Activated naive CD4-positive, alpha-beta T cell treated with anti-CD3 and anti-CD28 coated beads, Interleukin-2, amount 10 ng/mL, durations not matched to agents 7 days and 5 days (primary cell): ENCODE measurements at regions of chr22 and their contacts with region 1.

Region 1: GRCh38 chr22:50148991-50149721 is 21.4 kb upstream of the PANX2 start:
- DNase-seq: peak; percentile 84
- H3K4me3 Mint-ChIP-seq: no peak overlapping the region
- H3K27ac Mint-ChIP-seq: no peak overlapping the region
- H3K4me1 Mint-ChIP-seq: no peaks in the 10 kb centered on the region
- H3K27me3 Mint-ChIP-seq: peaks cover 34% of the 10 kb centered on the region

Region 2: GRCh38 chr22:49936018-49936952 is 212.9 kb before region 1 on chr22:
- CTCF ChIA-PET with region 1: no interaction called
- DNase-seq: peak; percentile 95
- H3K4me3 Mint-ChIP-seq: peak overlapping the region; percentile 69
- H3K27ac Mint-ChIP-seq: peak overlapping the region; percentile 92
- H3K4me1 Mint-ChIP-seq: peaks cover 35% of the 10 kb centered on the region
- H3K27me3 Mint-ChIP-seq: no peaks in the 10 kb centered on the region

Region 3: DNA sequence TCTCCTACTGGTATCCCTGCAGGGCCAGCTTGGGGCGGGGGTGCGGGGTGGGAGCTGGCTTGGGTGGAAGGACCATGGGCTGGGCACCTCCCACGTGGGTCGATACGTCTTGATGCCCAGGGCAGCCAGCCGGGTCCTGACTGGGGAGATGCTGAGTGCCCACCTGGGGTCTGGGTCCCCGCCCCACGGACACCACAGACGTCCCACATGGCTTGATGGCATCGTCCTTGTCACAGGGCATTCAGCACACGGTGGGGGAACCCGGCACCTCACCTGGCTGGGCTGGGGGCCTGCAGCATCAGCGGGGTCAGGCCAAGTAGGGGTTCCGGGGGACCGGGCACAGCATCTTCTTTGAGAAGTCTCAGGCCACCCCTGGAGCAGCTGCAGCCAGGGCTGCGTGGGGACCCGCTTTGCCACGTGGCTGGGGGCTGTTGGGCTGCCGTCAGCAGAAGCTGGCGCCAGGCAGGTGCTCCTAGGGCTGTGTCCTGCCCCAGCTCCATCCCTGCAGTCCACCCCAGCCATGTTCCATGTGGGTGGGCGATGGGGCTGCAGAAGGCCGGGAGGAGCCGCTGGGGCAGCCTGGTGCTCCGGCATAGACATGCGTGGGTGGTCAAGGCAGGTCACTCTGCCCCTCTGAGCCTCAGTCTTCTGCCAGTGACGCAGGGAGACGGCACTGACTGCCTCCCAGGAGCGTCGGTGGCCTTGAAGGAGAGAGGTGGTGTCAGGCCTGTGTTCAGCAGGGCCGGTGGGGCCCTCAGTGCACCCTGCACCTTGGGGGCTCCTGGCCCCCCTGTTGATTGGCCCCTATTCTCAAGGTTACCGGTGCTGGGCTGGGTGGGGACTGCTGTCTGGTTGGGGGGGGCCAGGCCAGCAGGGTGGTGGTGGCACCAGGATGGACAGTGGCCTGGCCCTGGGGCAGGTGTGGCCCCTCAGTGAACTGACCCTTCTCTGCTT is 60.1 kb after region 1 on chr22:
- CTCF ChIA-PET with region 1: interaction called, 14 read pairs
- DNase-seq: no peak
- H3K4me3 Mint-ChIP-seq: no peak overlapping the region
- H3K27ac Mint-ChIP-seq: no peak overlapping the region
- H3K4me1 Mint-ChIP-seq: peaks cover 11% of the 10 kb centered on the region
- H3K27me3 Mint-ChIP-seq: no peaks in the 10 kb centered on the region